ENCODE measurements at regions of chr1 and their contacts with region 1.

Region 1: DNA sequence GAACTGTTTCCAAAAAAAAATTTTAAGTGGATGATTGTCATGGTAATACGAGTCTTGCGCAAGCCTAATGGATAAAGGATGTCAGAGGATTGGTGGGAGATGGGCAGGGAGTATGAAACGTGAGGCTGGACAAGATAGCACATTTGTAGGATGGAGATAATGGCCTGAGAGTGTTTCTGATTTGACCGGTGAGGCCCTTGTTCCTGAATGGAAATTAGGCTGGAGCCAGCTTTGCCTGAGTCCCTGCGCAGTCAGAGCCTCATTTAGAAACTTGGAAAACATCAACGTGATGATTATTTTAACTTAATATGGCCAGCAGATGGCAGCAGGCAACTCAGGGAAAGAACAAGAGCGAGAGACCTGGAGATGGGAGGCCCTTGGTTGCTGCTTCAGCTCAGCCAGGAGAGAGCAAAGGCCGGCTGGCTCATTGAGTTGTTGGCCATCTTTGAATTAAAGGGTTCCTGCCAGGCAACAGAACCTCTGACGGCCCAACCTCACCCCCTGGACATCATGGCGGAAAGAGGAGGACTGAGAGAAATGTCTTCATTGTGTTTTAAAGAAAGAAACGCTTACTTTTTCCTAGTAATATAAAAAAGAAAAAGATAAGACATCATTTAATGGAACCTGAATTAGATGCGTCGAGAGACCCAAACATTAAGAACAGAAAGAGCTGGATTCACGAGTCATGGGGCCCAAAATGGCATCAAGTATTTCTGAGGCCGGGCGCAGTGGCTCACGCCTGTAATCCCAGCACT is 80.3 kb downstream of the SELENOF start:
- DNase-seq: peak; percentile 94
- H3K4me3 ChIP-seq: no peak overlapping the region
- H3K27ac ChIP-seq: no peak overlapping the region
- H3K4me1 ChIP-seq: no peaks in the 10 kb centered on the region
- H3K27me3 ChIP-seq: no peaks in the 10 kb centered on the region
- CTCF ChIP-seq: peak; percentile 74

Region 2: DNA sequence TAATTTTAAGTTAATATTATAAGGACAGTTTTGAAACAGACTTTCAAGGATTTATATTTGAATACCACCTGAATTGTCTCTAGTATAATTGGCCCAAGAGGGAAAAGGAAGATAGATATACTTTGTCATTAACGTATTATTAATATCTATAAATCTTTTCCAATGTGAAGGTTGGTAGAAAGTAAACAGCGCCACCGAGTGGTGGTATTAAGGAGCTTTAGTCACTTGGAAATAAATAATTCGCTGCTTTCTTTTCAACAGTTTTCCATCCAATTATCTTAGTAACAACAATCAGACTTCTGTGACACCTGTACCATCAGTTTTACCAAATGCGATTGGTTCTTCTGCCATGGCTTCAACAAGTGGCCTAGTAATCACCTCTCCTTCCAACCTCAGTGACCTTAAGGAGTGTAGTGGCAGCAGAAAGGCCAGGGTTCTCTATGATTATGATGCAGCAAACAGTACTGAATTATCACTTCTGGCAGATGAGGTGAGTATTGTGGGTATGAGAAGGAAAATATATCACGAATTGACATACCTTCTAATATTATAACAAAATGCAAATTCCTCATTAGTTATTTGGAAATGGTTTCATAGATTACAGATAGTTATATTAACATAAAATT is 91.6 kb before region 1 on chr1:
- CTCF ChIA-PET with region 1: no interaction called
- POLR2A ChIA-PET with region 1: no interaction called
- intact Hi-C with region 1: no loop called
- DNase-seq: peak; percentile 51
- H3K4me3 ChIP-seq: no peak overlapping the region
- H3K27ac ChIP-seq: no peak overlapping the region
- H3K4me1 ChIP-seq: no peaks in the 10 kb centered on the region
- H3K27me3 ChIP-seq: no peaks in the 10 kb centered on the region
- CTCF ChIP-seq: peak; percentile 87

Region 3: GRCh38 chr1:86965012-86965826 is 131.6 kb after region 1 on chr1:
- CTCF ChIA-PET with region 1: interaction called, 7 read pairs
- POLR2A ChIA-PET with region 1: no interaction called
- intact Hi-C with region 1: loop called (anchors 1 kb)
- DNase-seq: peak; percentile 68
- H3K4me3 ChIP-seq: no peak overlapping the region
- H3K27ac ChIP-seq: no peak overlapping the region
- H3K4me1 ChIP-seq: no peaks in the 10 kb centered on the region
- H3K27me3 ChIP-seq: no peaks in the 10 kb centered on the region
- CTCF ChIP-seq: peak; percentile 79

Region 4: GRCh38 chr1:86975993-86976550 is 142.4 kb after region 1 on chr1:
- CTCF ChIA-PET with region 1: no interaction called
- POLR2A ChIA-PET with region 1: no interaction called
- intact Hi-C with region 1: no loop called
- DNase-seq: peak; percentile 15
- H3K4me3 ChIP-seq: no peak overlapping the region
- H3K27ac ChIP-seq: no peak overlapping the region
- H3K4me1 ChIP-seq: peaks cover 25% of the 10 kb centered on the region
- H3K27me3 ChIP-seq: no peaks in the 10 kb centered on the region
- CTCF ChIP-seq: no peak

Region 5: DNA sequence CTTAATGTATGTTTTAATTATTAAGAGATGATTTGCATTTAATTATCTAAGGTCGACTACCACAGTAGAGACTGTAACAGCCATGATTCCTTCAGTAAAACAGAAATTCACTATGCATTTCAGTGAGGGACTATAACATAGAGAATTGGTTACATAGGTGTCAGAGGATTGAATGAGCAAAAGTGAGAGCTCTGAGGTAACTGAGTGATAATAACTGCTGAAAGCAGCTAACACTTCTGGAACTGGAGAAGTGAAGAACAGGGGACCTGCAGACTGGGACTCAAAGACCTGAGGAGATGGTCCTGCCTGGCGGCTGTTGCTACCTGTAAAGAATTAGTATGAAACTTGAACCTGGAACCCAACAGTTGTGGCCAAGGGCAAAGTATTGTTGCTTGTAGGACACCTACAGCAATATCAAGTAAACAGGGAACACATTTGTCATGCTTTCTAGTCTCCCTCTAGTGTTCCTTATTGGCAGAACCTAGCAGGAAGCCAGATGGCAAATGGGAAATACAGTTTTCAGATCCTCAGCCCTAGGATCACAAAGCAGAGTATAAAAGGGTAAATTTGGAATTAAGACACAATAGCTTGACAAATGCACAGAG is 191.4 kb after region 1 on chr1:
- CTCF ChIA-PET with region 1: no interaction called
- POLR2A ChIA-PET with region 1: no interaction called
- intact Hi-C with region 1: loop called (anchors 5 kb)
- DNase-seq: peak; percentile 65
- H3K4me3 ChIP-seq: no peak overlapping the region
- H3K27ac ChIP-seq: no peak overlapping the region
- H3K4me1 ChIP-seq: peaks cover 8% of the 10 kb centered on the region
- H3K27me3 ChIP-seq: no peaks in the 10 kb centered on the region
- CTCF ChIP-seq: peak; percentile 67

Region 6: DNA sequence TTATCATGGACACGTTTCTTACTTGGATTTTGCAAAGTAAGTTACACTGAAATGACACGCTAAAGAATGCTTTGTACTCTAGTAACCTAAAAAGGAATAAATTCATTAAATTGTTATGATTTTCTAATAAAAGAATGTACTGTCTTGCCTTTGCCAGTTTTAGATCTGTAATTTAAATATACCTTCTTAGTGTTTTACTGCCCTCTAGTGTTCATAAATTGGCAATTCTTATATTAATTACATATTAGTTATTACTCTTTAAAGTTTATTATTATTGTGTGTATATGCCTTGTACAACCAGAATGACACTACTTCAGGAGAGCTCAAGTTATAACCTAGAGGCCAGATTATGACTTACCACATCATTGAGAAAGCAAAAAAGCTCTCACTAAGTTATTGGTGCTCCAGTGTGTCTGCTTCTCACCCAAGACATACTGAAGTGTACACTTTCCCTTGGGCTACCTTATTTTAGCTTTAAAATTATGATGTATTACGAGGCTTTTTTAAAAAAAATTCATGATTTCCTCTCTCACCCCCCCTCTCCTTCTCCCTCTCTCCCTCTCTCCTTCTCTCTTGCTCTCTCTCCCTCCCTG is 250.7 kb after region 1 on chr1:
- CTCF ChIA-PET with region 1: interaction called, 6 read pairs
- POLR2A ChIA-PET with region 1: no interaction called
- intact Hi-C with region 1: loop called (anchors 2 kb)
- DNase-seq: peak; percentile 58
- H3K4me3 ChIP-seq: no peak overlapping the region
- H3K27ac ChIP-seq: no peak overlapping the region
- H3K4me1 ChIP-seq: no peaks in the 10 kb centered on the region
- H3K27me3 ChIP-seq: no peaks in the 10 kb centered on the region
- CTCF ChIP-seq: peak; percentile 65

Measured in A673 (cell line).